ENCODE measurements at regions of chr21 and their contacts with region 1.

Region 1: DNA sequence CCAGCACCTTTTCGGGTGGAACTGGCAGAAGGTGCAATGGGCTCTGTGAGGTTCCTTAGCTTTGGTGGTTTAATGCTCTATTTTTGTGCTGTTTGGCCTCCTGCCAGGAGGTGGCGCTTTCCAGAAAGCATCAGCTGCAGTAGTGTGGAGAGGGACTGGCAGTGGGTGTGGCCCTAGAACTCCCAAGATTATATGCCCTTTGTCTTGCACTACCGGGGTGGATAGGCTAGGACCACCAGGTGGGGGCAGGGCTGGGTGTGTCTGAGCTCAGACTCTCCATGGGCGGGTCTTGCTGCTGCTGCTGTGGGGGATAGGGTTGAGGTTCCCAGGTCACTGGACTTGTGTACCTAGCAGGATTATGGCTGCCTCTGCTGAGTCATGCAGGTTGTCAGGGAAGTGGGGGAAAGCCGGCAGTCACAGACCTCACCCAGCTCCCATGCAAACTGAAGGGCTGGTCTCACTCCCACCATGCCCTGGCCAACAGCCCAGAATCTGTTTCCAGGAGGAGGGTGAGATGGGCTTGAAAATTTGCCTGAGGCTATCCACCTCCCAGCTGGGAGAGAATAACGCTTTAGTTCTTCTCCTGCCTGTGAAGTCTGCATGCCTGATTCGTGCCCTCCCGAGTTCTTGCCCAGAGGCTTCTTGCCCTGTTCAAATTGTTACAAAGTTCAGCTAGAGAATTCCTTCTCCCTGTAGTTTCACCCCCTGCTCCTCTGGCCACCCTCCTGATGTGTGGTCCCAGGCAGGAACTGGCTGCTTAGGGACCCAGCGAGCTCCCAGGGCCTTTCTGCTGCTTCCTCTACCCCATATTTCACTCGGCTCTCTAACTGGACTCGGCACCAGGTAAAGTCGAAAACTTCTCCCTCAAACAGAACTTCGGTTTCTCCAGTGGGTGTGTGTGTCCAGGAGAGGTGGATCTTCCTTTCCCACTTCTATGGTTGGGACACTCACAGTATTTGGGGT is 76.5 kb upstream of the BTG3 start:
- DNase-seq: peak; percentile 64
- ATAC-seq: peak; percentile 26
- H3K4me3 Mint-ChIP-seq: no peak overlapping the region
- H3K27ac Mint-ChIP-seq: no peak overlapping the region
- H3K4me1 Mint-ChIP-seq: peaks cover 35% of the 10 kb centered on the region
- H3K27me3 Mint-ChIP-seq: peaks cover 2% of the 10 kb centered on the region

Region 2: GRCh38 chr21:17636711-17637110 is 52.5 kb before region 1 on chr21:
- CTCF ChIA-PET with region 1: no interaction called
- POLR2A ChIA-PET with region 1: no interaction called
- intact Hi-C with region 1: no loop called
- DNase-seq: no peak
- ATAC-seq: no peak
- H3K4me3 Mint-ChIP-seq: no peak overlapping the region
- H3K27ac Mint-ChIP-seq: no peak overlapping the region
- H3K4me1 Mint-ChIP-seq: no peaks in the 10 kb centered on the region
- H3K27me3 Mint-ChIP-seq: no peaks in the 10 kb centered on the region

Region 3: DNA sequence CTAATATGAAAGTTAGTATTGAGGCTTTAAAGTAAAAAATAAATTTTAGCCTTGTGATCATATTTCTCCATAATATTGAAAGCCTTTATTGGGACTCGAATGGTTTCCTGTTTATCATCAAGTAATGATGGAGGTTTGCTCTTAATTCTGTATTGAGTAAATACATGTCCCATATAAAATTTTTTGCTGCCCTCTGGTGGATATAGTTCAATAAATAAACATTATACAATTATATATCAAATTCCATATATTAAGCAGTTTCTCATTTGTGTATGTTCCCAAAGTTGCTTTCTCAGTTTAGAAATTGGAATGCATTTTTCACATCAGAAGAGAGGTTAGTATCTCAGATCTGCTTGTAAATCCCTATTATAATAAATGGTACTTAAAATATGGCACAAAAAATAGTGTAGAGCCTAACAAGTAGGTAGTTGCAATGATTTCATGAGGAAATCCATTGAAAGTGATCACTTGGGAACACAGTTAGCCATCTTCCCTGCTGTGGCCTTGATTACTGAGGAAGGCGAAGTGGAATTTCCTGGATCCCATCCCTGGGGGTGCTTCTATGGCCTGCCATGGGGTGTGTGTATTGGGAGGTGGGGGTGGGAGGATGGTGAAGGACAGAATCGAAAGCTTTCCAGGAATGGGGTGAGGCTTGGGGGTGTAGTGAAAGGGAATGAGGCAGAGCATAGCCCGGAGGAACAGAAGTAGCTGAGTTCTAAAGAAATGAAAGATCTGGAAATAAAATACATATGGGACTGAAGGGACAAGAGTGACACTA is 214.0 kb after region 1 on chr21:
- CTCF ChIA-PET with region 1: interaction called, 14 read pairs
- POLR2A ChIA-PET with region 1: no interaction called
- intact Hi-C with region 1: no loop called
- DNase-seq: no peak
- ATAC-seq: no peak
- H3K4me3 Mint-ChIP-seq: no peak overlapping the region
- H3K27ac Mint-ChIP-seq: no peak overlapping the region
- H3K4me1 Mint-ChIP-seq: peaks cover 4% of the 10 kb centered on the region
- H3K27me3 Mint-ChIP-seq: no peaks in the 10 kb centered on the region

Measured in activated CD4-positive, alpha-beta T cell treated with anti-CD3 and anti-CD28 coated beads for 36 hours (primary cell).